Kidney (tissue), 22 donors: ENCODE measurements at regions of chr5 and their contacts with region 1.

Region 1: GRCh38 chr5:180291943-180292831 is at the start of gene MAPK9:
- DNase-seq: peak; percentile 83 to 96 (median 93)
- H3K4me3 ChIP-seq: peak within 1 kb of the TSS; percentile 63 to 72 (median 68)
- H3K27ac ChIP-seq: peak within 1 kb of the TSS; percentile 85
- H3K4me1 ChIP-seq: peaks cover 0 to 16% (median 0%) of the 10 kb centered on the region in 3 donors
- H3K27me3 ChIP-seq: no peaks in the 10 kb centered on the region
- CTCF ChIP-seq: no peak
- total RNA-seq, gene MAPK9: 30.9 TPM

Region 2: GRCh38 chr5:180390441-180391190 is 98.4 kb after region 1 on chr5:
- intact Hi-C with region 1: no loop called
- DNase-seq: no peak
- H3K4me3 ChIP-seq: no peak overlapping the region
- H3K27ac ChIP-seq: no peak overlapping the region
- H3K4me1 ChIP-seq: no peaks in the 10 kb centered on the region
- H3K27me3 ChIP-seq: no peaks in the 10 kb centered on the region
- CTCF ChIP-seq: no peak

Region 3: DNA sequence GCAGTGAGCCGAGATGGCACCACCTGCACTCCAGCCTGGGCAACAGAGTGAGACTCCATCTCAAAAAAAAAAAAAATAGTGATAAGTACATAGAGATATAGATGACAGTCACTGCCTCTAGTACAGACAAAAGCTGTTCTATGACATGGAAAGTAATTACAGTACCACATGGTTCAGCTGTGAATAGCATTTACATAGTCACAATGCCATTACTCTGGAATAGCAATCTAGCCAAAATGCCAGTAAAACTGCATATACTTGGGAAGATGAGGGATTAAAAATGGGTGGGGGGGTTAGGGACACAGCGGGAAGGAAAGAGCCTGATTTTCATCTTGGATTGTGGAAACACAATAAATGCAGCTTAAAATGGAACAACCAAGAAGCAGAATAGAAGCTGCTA is 162.6 kb after region 1 on chr5:
- intact Hi-C with region 1: no loop called
- DNase-seq: no peak
- H3K4me3 ChIP-seq: no peak overlapping the region
- H3K27ac ChIP-seq: no peak overlapping the region
- H3K4me1 ChIP-seq: no peaks in the 10 kb centered on the region
- H3K27me3 ChIP-seq: no peaks in the 10 kb centered on the region
- CTCF ChIP-seq: no peak

Region 4: DNA sequence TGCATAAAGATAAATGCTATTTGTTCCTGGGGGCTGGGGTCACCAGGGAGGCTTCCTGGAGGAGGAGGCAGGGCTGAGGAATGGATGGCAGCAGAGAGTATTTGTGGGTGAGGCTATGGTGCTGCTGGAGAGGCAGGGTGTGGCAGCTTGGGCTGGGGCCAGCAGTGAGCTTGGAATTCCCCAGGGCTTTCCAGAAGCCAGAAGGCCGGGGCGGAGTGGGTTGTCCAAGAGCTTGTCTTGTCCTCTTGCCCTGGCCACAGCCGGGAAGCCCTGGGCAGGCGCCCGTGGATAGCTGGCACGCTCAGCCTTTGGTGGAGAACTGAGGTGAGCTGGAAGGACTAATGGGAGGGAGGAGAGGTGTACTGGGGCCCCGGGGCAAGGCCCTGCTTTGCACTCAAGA is 174.9 kb after region 1 on chr5:
- intact Hi-C with region 1: loop called (anchors 10 kb)
- DNase-seq: peak in 1 of 5 donors; percentile 88
- H3K4me3 ChIP-seq: no peak overlapping the region
- H3K27ac ChIP-seq: no peak overlapping the region
- H3K4me1 ChIP-seq: no peaks in the 10 kb centered on the region
- H3K27me3 ChIP-seq: no peaks in the 10 kb centered on the region
- CTCF ChIP-seq: no peak